ENCODE measurements at regions of chr1 and their contacts with region 1.

Region 1: GRCh38 chr1:115595279-115596079 is 46.3 kb upstream of the VANGL1 start:
- DNase-seq: peak; percentile 87 to 92 (median 90)
- ATAC-seq: peak; percentile 81 to 92 (median 89)
- H3K4me3 ChIP-seq: no peak overlapping the region
- H3K27ac ChIP-seq: no peak overlapping the region
- H3K4me1 ChIP-seq: peaks cover 0 to 31% (median 12%) of the 10 kb centered on the region in 12 donors
- H3K27me3 ChIP-seq: no peaks in the 10 kb centered on the region
- CTCF ChIP-seq: peak in 11 of 12 donors; percentile 89 to 98 (median 95)
- POLR2A ChIP-seq: no peak

Region 2: GRCh38 chr1:114979278-114979891 is 616.1 kb before region 1 on chr1:
- intact Hi-C with region 1: loop called (anchors 2 to 10 kb)
- DNase-seq: peak in 4 of 5 donors; percentile 25 to 39 (median 38)
- ATAC-seq: peak in 1 of 4 donors; percentile 51
- H3K4me3 ChIP-seq: no peak overlapping the region
- H3K27ac ChIP-seq: no peak overlapping the region
- H3K4me1 ChIP-seq: no peaks in the 10 kb centered on the region
- H3K27me3 ChIP-seq: peaks cover 0 to 10% (median 0%) of the 10 kb centered on the region in 9 donors
- CTCF ChIP-seq: peak; percentile 73 to 90 (median 80)
- POLR2A ChIP-seq: no peak

Region 3: GRCh38 chr1:115275212-115275611 is 320.3 kb before region 1 on chr1:
- intact Hi-C with region 1: loop called in 1 of 10 experiments (anchors 5 kb)
- DNase-seq: no peak
- ATAC-seq: no peak
- H3K4me3 ChIP-seq: no peak overlapping the region
- H3K27ac ChIP-seq: peak overlapping the region in 5 of 12 donors; percentile 7 to 66 (median 28)
- H3K4me1 ChIP-seq: peaks cover 0 to 16% (median 0%) of the 10 kb centered on the region in 12 donors
- H3K27me3 ChIP-seq: no peaks in the 10 kb centered on the region
- CTCF ChIP-seq: peak in 11 of 12 donors; percentile 22 to 51 (median 33)
- POLR2A ChIP-seq: no peak

Region 4: GRCh38 chr1:115545791-115546733 is 49.4 kb before region 1 on chr1:
- intact Hi-C with region 1: loop called in 5 of 10 experiments (anchors 1 to 10 kb)
- DNase-seq: peak in 3 of 5 donors; percentile 25 to 56 (median 53)
- ATAC-seq: peak; percentile 68 to 90 (median 83)
- H3K4me3 ChIP-seq: no peak overlapping the region
- H3K27ac ChIP-seq: peak overlapping the region in 3 of 12 donors; percentile 16 to 36 (median 25)
- H3K4me1 ChIP-seq: peaks cover 2 to 17% (median 11%) of the 10 kb centered on the region in 12 donors
- H3K27me3 ChIP-seq: no peaks in the 10 kb centered on the region
- CTCF ChIP-seq: peak; percentile 21 to 64 (median 46)
- POLR2A ChIP-seq: no peak

Region 5: DNA sequence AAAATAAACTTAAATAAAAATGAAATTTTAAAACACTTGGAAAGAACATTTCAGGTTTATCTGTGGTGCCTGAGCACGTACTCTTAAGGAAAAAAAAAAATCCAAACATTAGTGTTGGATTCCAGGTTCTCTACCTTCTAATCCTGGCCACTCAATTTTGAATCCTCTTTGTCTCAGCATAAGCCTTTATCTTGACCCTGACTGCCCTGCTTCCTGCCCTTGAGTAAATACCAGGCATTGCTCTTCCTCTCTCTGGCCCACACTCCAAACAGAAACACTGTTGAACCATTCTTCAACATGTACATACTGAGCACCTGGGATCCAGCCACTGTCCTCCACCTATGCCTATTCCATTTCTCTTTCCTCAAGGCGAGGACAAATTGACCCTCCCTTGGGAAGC is 34.9 kb after region 1 on chr1:
- intact Hi-C with region 1: no loop called
- DNase-seq: no peak
- ATAC-seq: peak in 1 of 4 donors; percentile 50
- H3K4me3 ChIP-seq: no peak overlapping the region
- H3K27ac ChIP-seq: no peak overlapping the region
- H3K4me1 ChIP-seq: no peaks in the 10 kb centered on the region
- H3K27me3 ChIP-seq: no peaks in the 10 kb centered on the region
- CTCF ChIP-seq: no peak
- POLR2A ChIP-seq: no peak